ENCODE measurements at regions of chr7 and their contacts with region 1.

Region 1: DNA sequence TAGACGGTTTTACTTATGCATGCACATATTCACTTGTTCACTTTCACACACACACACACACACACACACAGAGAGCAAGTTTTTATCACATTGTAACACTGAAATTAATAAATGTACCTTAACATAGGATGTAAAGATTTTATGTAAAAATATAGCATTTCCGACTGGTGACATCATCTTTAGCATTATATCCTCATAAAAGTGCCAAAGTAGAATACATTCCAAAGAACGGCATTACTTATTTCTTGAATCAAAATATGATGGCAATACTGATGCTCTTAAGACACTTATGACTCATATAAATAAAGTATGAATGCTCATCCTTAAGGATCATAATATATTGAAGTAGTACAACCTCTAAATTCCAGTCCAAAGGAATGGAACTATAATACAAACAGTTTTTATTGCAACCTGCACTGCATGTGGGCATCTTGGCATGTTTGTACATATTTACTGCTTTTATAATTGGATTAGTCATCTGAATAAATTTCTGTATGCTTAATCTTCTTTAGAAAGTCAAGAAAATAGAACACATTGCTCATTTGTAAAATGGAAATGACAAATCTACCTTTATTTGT is 290.0 kb upstream of the SEMA3A start:
- DNase-seq: peak; percentile 88
- ATAC-seq: peak; percentile 97
- H3K4me3 ChIP-seq: no peak overlapping the region
- H3K27ac ChIP-seq: peak overlapping the region; percentile 37
- H3K4me1 ChIP-seq: peaks cover 7% of the 10 kb centered on the region; the same call in 1 of the 2 replicates
- H3K27me3 ChIP-seq: no peaks in the 10 kb centered on the region
- CTCF ChIP-seq: no peak

Region 2: DNA sequence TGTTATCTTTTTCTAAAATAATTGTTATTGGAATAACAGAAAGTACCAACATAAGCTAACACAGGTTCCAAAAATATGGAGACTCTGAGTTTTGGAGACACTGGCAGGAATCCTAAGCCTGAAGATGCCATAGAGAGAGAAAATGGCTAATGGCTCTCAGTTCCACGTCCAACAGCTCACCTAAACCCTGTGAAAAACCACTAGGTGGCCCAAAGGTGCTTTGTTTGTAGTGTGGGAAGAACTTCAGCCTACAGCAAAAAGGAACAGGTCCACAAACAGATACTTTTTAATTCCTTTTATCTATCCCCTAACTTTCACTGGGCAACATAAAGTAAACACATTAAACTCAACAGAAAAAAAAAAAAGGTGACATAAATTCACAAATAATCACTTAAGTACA is 430.0 kb after region 1 on chr7:
- CTCF ChIA-PET with region 1: no interaction called
- POLR2A ChIA-PET with region 1: no interaction called
- intact Hi-C with region 1: loop called (anchors 5 kb)
- DNase-seq: peak; percentile 30
- ATAC-seq: peak; percentile 28; the same call in 1 of the 2 replicates
- H3K4me3 ChIP-seq: no peak overlapping the region
- H3K27ac ChIP-seq: no peak overlapping the region
- H3K4me1 ChIP-seq: peaks cover 19% of the 10 kb centered on the region
- H3K27me3 ChIP-seq: no peaks in the 10 kb centered on the region
- CTCF ChIP-seq: peak; percentile 48